ENCODE measurements at regions of chr17 and their contacts with region 1.

Region 1: GRCh38 chr17:74659898-74660297 is 36.4 kb upstream of the CD300E start:
- DNase-seq: no peak
- H3K4me3 ChIP-seq: no peak overlapping the region
- H3K27ac ChIP-seq: no peak overlapping the region
- H3K4me1 ChIP-seq: 0 out of 7 replicates have a peak, but pooled peaks cover 0 to 2% (median 0%) of the 10 kb centered on the region in 4 experiments
- H3K27me3 ChIP-seq: no peaks in the 10 kb centered on the region
- CTCF ChIP-seq: no peak
- EP300 ChIP-seq: no peak
- POLR2A ChIP-seq: no peak
- RAD21 ChIP-seq: no peak

Region 2: DNA sequence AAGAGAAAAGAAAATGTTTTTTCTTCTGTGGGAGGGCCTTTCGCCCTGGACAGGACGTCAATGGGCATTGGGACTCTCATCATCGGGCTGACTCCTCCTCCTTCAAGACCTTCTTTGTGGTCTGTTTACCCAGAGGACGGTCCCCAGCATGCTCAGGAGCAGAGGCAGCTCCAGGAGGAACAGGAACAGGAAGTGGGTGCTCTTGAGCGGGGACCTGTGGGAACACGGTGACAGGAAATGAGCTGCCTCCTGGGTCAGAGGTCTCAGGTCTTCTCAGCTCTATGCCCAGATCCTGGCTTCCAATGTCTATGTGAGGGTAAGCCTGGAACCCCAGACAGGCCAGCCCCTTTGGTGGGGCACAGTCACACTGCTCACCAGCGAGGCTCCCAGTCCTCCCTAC is 80.0 kb before region 1 on chr17:
- CTCF ChIA-PET with region 1: no interaction called
- POLR2A ChIA-PET with region 1: no interaction called
- DNase-seq: no peak
- H3K4me3 ChIP-seq: no peak overlapping the region
- H3K27ac ChIP-seq: no peak overlapping the region
- H3K4me1 ChIP-seq: no peaks in the 10 kb centered on the region
- H3K27me3 ChIP-seq: 0 out of 7 replicates have a peak, but pooled peaks cover 0 to 3% (median 0%) of the 10 kb centered on the region in 4 experiments
- CTCF ChIP-seq: no peak
- EP300 ChIP-seq: no peak
- POLR2A ChIP-seq: no peak
- RAD21 ChIP-seq: no peak

Region 3: GRCh38 chr17:74619077-74619673 is 40.7 kb before region 1 on chr17:
- CTCF ChIA-PET with region 1: no interaction called
- POLR2A ChIA-PET with region 1: no interaction called
- DNase-seq: no peak
- H3K4me3 ChIP-seq: no peak overlapping the region
- H3K27ac ChIP-seq: no peak overlapping the region
- H3K4me1 ChIP-seq: no peaks in the 10 kb centered on the region
- H3K27me3 ChIP-seq: peaks cover 0 to 7% (median 3%) of the 10 kb centered on the region in 4 experiments; a peak in 3 of 7 replicates
- CTCF ChIP-seq: no peak
- EP300 ChIP-seq: no peak
- POLR2A ChIP-seq: no peak
- RAD21 ChIP-seq: no peak

Region 4: GRCh38 chr17:74671031-74671771 is 11.3 kb after region 1 on chr17:
- CTCF ChIA-PET with region 1: interaction called, 40 read pairs
- POLR2A ChIA-PET with region 1: no interaction called
- DNase-seq: peak; percentile 81 to 97
- H3K4me3 ChIP-seq: peak overlapping the region in 2 of 4 experiments; percentile 11 to 32; a peak in 2 of 8 replicates
- H3K27ac ChIP-seq: no peak overlapping the region
- H3K4me1 ChIP-seq: no peaks in the 10 kb centered on the region; a peak in 1 of 7 replicates
- H3K27me3 ChIP-seq: peaks cover 10 to 53% (median 35%) of the 10 kb centered on the region in 4 experiments
- CTCF ChIP-seq: no peak
- EP300 ChIP-seq: no peak
- POLR2A ChIP-seq: no peak
- RAD21 ChIP-seq: no peak; a peak in 1 of 4 replicates

Region 5: DNA sequence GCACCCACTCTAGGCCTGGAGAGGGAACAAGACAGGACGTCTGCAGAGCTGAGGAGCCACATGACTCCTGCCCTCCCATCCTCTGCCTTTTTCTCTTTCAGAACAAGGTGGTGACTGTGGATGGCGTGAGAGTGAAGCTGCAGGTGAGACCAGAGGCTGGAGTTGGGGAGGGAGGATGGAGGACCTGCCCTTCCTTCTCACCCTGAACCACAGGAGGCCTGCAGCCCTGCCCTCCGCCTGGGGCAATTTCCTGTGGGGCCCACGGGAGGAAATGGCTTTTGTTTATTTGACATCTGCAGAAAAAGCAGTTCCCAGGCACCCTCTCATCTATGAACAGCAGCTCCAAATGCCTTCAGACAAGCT is 82.2 kb after region 1 on chr17:
- CTCF ChIA-PET with region 1: interaction called, 81 read pairs
- POLR2A ChIA-PET with region 1: interaction called, 5 read pairs
- DNase-seq: no peak
- H3K4me3 ChIP-seq: no peak overlapping the region
- H3K27ac ChIP-seq: no peak overlapping the region
- H3K4me1 ChIP-seq: peaks cover 10 to 29% (median 19%) of the 10 kb centered on the region in 4 experiments
- H3K27me3 ChIP-seq: peaks cover 0 to 3% (median 0%) of the 10 kb centered on the region in 4 experiments; a peak in 2 of 7 replicates
- CTCF ChIP-seq: no peak
- EP300 ChIP-seq: no peak
- POLR2A ChIP-seq: no peak
- RAD21 ChIP-seq: no peak

Region 6: GRCh38 chr17:74776044-74776977 is 116.4 kb after region 1 on chr17 and contains the start of gene NAT9:
- CTCF ChIA-PET with region 1: interaction called, 22 read pairs
- POLR2A ChIA-PET with region 1: no interaction called
- DNase-seq: peak; percentile 92 to 100
- H3K4me3 ChIP-seq: peak within 1 kb of the TSS; percentile 73 to 89 (median 80)
- H3K27ac ChIP-seq: peak within 1 kb of the TSS; percentile 39; the same call in 1 of the 2 replicates
- H3K4me1 ChIP-seq: peaks cover 0 to 6% (median 3%) of the 10 kb centered on the region in 4 experiments; a peak in 3 of 7 replicates
- H3K27me3 ChIP-seq: no peaks in the 10 kb centered on the region
- CTCF ChIP-seq: no peak
- EP300 ChIP-seq: no peak
- POLR2A ChIP-seq: no peak; a peak in 1 of 3 replicates
- RAD21 ChIP-seq: no peak
- total RNA-seq, gene NAT9: 40.6 and 42.7 TPM in 2 replicates

Measured in H1 (cell line).